Gastrocnemius medialis (tissue), 4 donors: ENCODE measurements at regions of chr3 and their contacts with region 1.

Region 1: DNA sequence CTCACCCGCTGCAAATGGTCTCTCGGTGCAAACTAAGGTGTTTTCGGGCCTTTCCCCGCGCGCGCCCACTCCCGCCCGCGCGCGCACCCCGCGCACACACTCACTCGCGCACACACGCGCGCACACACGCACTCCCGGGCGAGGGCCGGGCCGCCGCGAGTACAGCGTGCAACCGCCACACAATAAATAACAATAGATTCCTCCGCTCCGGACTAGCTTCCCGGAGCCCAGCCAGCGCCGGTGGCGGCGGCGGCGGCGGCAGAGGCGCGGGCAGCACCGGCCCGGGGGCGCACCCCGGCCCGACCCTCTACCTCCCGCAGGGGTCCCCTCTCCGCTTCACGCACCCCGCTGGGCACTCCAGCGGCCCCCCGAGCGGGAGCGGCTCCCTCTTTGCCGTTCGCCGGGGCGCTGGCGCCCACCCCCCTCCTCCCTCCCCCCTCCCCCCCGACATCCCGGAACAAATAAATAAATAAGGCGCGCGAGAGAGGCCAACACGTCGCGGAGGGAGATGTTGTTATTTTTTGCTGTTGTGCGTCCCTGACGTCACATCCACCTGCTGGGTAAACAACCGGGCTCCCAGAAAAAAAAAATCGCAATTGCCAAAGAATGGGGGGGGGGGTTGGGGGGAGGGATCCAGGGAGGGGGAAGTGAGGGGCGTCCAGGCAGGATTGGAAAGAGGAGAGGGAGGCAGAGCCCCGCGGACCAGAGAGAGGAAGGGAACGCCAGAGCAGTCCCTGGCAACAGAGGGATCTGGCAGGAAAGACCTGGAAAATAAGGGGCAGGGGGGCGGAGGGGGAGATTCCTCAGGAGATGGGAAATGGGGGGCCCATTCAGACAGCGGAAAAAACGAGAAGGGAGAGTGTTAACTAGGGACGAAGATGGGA is at the start of gene FOXP1:
- DNase-seq: peak; percentile 57 to 69
- ATAC-seq: peak; percentile 72 to 75
- H3K4me3 ChIP-seq: peak within 1 kb of the TSS; percentile 75 to 90 (median 83)
- H3K27ac ChIP-seq: peak within 1 kb of the TSS; percentile 92 to 94 (median 93)
- H3K4me1 ChIP-seq: peaks cover 23 to 25% of the 10 kb centered on the region in 2 donors
- H3K27me3 ChIP-seq: no peaks in the 10 kb centered on the region
- CTCF ChIP-seq: peak in 1 of 5 experiments; percentile 6
- POLR2A ChIP-seq: peak; percentile 40 to 74
- total RNA-seq, gene FOXP1: 13.2 to 46.6 (median 29.2) TPM

Region 2: DNA sequence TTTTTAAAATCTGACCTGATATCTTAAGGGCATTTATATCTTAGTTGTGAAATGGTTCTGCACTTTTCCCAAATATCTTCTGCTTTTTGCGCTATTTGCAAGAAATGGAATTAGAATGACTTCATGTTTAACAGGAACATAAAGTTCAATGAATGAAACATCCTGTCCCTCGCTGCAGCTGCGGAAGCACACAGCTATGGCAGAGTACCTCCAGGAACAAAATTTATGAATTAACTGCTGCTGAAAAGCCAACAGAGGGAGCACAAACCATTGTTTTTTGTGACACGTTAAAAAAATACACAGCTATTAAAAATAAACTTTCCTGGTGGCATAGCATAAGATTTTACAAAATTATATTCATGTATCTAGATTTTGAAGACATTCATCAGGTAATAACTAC is 867.0 kb before region 1 on chr3:
- in situ Hi-C with region 1: no loop called
- intact Hi-C with region 1: loop called (anchors 5 kb)
- DNase-seq: peak; percentile 13
- ATAC-seq: no peak
- H3K4me3 ChIP-seq: no peak overlapping the region
- H3K27ac ChIP-seq: no peak overlapping the region
- H3K4me1 ChIP-seq: no peaks in the 10 kb centered on the region
- H3K27me3 ChIP-seq: no peaks in the 10 kb centered on the region
- CTCF ChIP-seq: peak in 3 of 5 experiments; percentile 22 to 38 (median 33)
- POLR2A ChIP-seq: no peak

Region 3: DNA sequence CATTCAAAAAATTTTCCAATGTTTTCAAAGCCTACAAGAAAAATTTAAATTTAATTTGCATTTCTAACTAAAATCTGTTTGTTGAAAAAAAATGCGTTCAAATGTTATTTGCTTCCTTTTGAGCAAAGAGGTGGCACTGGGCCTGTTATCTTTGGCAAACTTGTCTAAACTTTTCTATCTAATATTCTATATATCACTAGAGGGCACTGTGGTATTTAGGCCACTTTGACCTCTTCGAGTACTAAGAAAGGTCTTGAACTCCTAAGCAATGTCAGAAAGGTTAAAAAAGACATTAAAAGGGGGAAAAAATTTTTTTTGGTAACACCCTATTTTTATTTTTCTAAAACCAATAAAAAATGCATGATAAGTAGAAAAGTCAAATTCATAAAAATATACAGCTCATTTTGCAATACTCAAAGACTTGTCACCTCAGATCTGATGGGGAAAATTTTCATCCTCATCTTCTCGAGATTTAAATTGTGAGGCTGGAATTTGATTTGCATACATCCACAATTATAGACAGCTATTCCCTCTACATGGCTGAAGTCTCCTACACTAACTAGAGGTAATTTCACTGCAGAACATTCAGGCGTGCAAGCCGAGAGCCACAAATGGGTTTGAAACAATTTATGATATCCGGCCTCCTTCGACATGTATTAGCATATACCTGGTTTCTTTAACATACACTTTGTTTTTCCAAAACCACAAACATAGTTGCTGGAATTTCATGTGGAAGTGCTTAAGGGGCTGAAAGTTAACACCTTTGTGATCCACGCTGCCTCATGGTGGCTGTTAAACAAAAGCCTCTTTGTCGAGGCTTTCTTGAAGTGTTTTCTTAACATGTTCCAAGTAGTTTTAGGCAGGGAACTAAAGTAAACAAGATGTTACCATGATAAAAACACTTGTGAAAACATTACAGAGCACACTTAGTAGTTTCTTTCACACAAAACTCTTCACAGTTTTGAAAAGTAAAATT is 576.7 kb before region 1 on chr3:
- in situ Hi-C with region 1: loop called in 1 of 4 experiments (anchors 10 kb)
- intact Hi-C with region 1: loop called (anchors 2 kb)
- DNase-seq: no peak
- ATAC-seq: peak; percentile 77 to 80
- H3K4me3 ChIP-seq: peak overlapping the region in 1 of 4 donors; percentile 27
- H3K27ac ChIP-seq: peak overlapping the region; percentile 48 to 69 (median 52)
- H3K4me1 ChIP-seq: peaks cover 49 to 57% of the 10 kb centered on the region in 2 donors
- H3K27me3 ChIP-seq: no peaks in the 10 kb centered on the region
- CTCF ChIP-seq: peak in 4 of 5 experiments; percentile 27 to 65 (median 45)
- POLR2A ChIP-seq: no peak

Region 4: GRCh38 chr3:71210257-71211007 is 373.4 kb before region 1 on chr3:
- in situ Hi-C with region 1: no loop called
- intact Hi-C with region 1: loop called (anchors 2 kb)
- DNase-seq: peak; percentile 69 to 83
- ATAC-seq: peak; percentile 92 to 98
- H3K4me3 ChIP-seq: peak overlapping the region in 1 of 4 donors; percentile 14
- H3K27ac ChIP-seq: peak overlapping the region; percentile 71 to 82 (median 77)
- H3K4me1 ChIP-seq: peaks cover 27 to 29% of the 10 kb centered on the region in 2 donors
- H3K27me3 ChIP-seq: no peaks in the 10 kb centered on the region
- CTCF ChIP-seq: peak in 2 of 5 experiments; percentile 37 to 42
- POLR2A ChIP-seq: peak in 1 of 2 donors; percentile 18

Region 5: DNA sequence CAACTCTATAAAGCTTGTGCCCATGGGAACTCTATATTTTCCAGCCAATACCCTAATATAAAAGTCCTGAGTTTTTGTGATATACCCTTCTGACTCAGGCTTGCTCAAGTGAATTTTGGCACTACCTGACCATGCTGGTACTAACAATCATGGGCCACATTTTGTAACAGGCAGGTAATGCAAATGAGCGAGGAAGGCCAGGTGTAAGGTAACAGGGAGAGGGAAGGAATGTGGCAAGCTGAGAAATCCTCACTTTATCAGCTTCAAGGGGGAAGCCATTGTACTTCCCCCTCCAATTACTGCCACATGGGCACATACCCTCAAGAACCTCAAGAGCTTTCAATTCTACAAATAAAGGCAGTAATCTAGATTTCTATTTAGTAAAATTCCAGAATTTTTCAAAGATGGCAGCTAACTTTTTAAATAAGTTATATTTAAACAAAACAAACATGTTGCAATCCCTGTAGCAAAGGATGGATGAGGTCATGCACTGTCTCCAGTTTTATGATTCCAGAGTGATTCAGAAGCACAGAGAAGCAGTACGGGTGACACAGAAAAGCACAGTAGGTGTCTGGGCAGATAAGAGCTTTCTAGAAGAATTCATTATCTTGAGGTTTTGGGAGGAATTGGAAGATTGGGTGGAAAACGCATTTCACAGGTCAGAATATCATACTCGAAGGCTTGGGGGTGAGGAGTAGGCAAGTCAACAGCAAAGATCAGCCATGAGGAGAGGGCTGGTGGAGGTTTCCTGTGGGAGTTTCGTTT is 87.9 kb before region 1 on chr3:
- in situ Hi-C with region 1: no loop called
- intact Hi-C with region 1: loop called (anchors 5 kb)
- DNase-seq: no peak
- ATAC-seq: no peak
- H3K4me3 ChIP-seq: peak overlapping the region in 1 of 4 donors; percentile 1
- H3K27ac ChIP-seq: peak overlapping the region in 1 of 4 donors; percentile 48
- H3K4me1 ChIP-seq: peaks cover 30 to 31% of the 10 kb centered on the region in 2 donors
- H3K27me3 ChIP-seq: no peaks in the 10 kb centered on the region
- CTCF ChIP-seq: no peak
- POLR2A ChIP-seq: no peak

Region 6: GRCh38 chr3:71657831-71658530 is 74.2 kb after region 1 on chr3:
- in situ Hi-C with region 1: no loop called
- intact Hi-C with region 1: no loop called
- DNase-seq: peak; percentile 35 to 50
- ATAC-seq: peak; percentile 51 to 90
- H3K4me3 ChIP-seq: no peak overlapping the region
- H3K27ac ChIP-seq: peak overlapping the region in 2 of 4 donors; percentile 17 to 36
- H3K4me1 ChIP-seq: peaks cover 9 to 11% of the 10 kb centered on the region in 2 donors
- H3K27me3 ChIP-seq: no peaks in the 10 kb centered on the region
- CTCF ChIP-seq: no peak
- POLR2A ChIP-seq: no peak